Activated CD4-positive, alpha-beta memory T cell treated with anti-CD3 and anti-CD28 coated beads for 36 hours (primary cell): ENCODE measurements at regions of chr1 and their contacts with region 1.

Region 1: DNA sequence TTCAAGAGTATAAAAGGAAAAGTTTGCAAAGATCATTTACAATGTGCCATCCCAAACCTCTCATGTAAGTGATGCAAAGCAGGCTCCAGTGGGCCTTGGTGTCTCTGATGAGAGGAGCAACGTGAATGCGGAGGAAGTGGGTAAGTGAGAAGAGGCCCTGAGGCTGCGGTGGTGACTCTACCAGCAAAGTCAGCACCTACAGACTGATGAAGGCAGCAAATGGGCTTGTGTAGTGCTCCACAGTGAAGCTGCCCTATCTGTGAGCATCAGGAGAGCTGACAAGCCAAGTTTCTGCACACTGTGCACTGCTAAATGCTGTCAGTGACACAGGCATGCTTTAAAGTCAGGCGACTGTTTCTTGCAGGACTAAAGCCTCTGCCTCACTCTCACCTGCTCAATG is 15.6 kb upstream of the RAP1A start:
- DNase-seq: peak; percentile 92
- H3K4me3 Mint-ChIP-seq: peak overlapping the region; percentile 70
- H3K27ac Mint-ChIP-seq: peak overlapping the region; percentile 96
- H3K4me1 Mint-ChIP-seq: peaks cover 72% of the 10 kb centered on the region
- H3K27me3 Mint-ChIP-seq: no peaks in the 10 kb centered on the region

Region 2: GRCh38 chr1:111203681-111204200 is 400.2 kb before region 1 on chr1:
- CTCF ChIA-PET with region 1: no interaction called
- POLR2A ChIA-PET with region 1: no interaction called
- intact Hi-C with region 1: loop called (anchors 5 kb)
- DNase-seq: peak; percentile 93
- H3K4me3 Mint-ChIP-seq: peak overlapping the region; percentile 92
- H3K27ac Mint-ChIP-seq: peak overlapping the region; percentile 97
- H3K4me1 Mint-ChIP-seq: peaks cover 38% of the 10 kb centered on the region
- H3K27me3 Mint-ChIP-seq: no peaks in the 10 kb centered on the region

Region 3: DNA sequence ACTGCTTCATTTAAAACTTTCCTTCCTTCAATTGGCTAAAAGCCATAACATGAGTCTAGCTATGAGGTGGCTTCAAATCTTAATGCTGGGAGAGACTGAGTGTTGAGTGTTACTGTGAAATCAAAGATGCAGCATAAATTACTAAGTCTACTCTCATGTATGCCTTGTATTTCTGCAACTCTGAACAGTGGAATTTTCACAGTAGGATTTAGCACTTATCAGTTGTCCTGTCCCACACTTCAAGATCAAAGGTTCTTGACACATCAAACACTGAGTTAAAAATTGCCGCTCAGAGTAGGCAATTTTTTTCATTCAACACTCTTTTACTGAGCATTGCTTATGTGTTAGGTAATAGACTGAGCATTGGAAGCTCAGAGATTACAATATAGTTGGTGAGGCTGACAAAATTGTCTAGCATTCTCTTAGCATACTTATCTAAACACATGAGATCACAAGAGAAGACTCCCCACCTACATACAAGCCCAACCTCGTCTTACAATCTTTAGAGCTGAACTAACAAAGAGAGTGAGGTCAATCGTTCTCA is 44.2 kb before region 1 on chr1:
- CTCF ChIA-PET with region 1: interaction called, 3 read pairs
- POLR2A ChIA-PET with region 1: interaction called, 3 read pairs
- intact Hi-C with region 1: loop called (anchors 5 kb)
- DNase-seq: no peak
- H3K4me3 Mint-ChIP-seq: no peak overlapping the region
- H3K27ac Mint-ChIP-seq: no peak overlapping the region
- H3K4me1 Mint-ChIP-seq: peaks cover 5% of the 10 kb centered on the region
- H3K27me3 Mint-ChIP-seq: no peaks in the 10 kb centered on the region

Region 4: DNA sequence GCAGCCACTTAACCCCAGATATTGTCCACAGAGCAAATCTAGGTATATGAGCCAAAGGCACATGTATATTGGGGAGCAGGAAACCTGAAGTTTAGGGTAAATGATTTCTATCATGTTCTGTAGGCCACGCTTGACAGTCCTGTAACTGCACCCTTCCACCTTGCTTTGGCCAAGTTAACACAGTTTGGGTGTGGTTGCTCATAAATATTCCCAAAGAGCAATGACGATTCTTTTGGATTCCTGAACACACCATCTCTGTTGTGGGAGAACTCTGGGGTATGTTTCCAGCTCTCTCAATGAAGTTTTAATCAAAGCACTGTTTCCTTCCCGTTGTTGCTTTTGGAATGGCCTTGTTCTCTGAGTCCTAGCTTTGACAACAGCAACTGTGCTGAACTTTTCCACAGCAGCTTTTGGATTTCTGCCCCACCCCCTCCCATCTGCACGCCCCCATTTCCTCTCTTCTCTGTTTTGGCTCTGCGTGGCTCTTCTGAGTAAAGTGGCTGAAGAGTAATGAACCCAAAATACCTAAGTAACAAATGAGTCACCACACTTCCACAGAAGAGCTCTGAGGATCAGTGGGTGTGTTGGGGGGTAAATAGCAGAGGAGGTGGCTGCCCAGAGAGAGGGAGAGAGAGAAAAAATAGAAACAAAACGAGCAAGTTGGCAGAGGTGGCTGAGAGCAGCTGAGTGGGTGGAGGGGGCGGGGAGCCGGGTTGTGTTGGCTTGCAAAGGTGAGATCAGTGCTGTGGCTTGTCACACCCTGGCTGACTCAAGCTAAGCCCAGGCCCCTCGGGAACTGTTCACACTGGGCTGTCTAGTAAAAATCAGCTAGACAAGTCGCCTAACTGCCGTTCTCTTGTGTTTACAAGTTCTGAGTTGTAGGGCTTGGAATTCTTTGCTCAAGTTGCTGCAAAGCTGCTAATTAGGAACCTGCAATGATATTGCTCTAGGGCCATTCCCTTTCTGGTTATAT is 11.3 kb before region 1 on chr1:
- CTCF ChIA-PET with region 1: interaction called, 57 read pairs
- POLR2A ChIA-PET with region 1: interaction called, 70 read pairs
- intact Hi-C with region 1: loop called (anchors 1 kb)
- DNase-seq: peak; percentile 99
- H3K4me3 Mint-ChIP-seq: peak overlapping the region; percentile 61
- H3K27ac Mint-ChIP-seq: peak overlapping the region; percentile 93
- H3K4me1 Mint-ChIP-seq: peaks cover 74% of the 10 kb centered on the region
- H3K27me3 Mint-ChIP-seq: no peaks in the 10 kb centered on the region

Region 5: DNA sequence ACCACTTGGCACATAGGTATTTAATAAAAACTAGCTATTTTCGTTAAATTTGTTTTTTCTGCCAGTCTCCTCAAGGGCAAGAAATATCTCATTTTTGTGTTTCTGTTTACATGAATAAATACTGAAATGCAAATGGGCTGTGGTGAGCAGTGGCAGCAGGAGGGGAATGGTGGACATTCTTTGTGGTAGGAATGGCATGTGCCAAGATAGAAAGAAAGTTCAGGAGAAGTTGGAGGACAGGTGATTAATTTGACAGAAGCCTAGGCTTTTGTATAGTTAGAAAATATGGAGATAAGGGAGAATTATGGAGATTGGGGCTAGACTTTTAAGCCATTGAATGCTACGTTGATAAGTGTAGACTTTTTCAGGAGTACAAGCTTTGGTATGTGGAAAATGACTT is 24.2 kb after region 1 on chr1:
- CTCF ChIA-PET with region 1: interaction called, 8 read pairs
- POLR2A ChIA-PET with region 1: interaction called, 151 read pairs
- intact Hi-C with region 1: loop called (anchors 1 kb)
- DNase-seq: no peak
- H3K4me3 Mint-ChIP-seq: peak overlapping the region; percentile 18
- H3K27ac Mint-ChIP-seq: peak overlapping the region; percentile 68
- H3K4me1 Mint-ChIP-seq: peaks cover 82% of the 10 kb centered on the region
- H3K27me3 Mint-ChIP-seq: no peaks in the 10 kb centered on the region

Region 6: DNA sequence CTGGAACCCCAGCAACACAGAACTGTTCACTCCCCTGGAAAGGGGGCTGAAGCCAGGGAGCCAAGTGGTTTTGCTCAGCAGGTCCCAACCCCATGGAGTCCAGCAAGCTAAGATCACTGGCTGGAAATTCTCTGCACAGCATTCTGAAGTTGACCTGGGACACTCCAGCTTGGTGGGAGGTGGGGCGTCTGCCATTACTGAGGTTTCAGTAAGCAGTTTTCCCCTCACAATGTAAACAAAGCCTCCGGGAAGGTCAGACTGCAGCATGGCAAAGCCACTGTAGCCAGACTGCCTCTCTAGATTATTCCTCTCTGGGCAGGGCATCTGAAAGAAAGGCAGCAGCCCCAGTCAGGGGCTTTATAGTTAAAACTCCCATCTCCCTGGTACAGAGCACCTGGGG is 75.6 kb after region 1 on chr1:
- CTCF ChIA-PET with region 1: no interaction called
- POLR2A ChIA-PET with region 1: no interaction called
- intact Hi-C with region 1: no loop called
- DNase-seq: no peak
- H3K4me3 Mint-ChIP-seq: no peak overlapping the region
- H3K27ac Mint-ChIP-seq: no peak overlapping the region
- H3K4me1 Mint-ChIP-seq: peaks cover 46% of the 10 kb centered on the region
- H3K27me3 Mint-ChIP-seq: no peaks in the 10 kb centered on the region

Region 7: DNA sequence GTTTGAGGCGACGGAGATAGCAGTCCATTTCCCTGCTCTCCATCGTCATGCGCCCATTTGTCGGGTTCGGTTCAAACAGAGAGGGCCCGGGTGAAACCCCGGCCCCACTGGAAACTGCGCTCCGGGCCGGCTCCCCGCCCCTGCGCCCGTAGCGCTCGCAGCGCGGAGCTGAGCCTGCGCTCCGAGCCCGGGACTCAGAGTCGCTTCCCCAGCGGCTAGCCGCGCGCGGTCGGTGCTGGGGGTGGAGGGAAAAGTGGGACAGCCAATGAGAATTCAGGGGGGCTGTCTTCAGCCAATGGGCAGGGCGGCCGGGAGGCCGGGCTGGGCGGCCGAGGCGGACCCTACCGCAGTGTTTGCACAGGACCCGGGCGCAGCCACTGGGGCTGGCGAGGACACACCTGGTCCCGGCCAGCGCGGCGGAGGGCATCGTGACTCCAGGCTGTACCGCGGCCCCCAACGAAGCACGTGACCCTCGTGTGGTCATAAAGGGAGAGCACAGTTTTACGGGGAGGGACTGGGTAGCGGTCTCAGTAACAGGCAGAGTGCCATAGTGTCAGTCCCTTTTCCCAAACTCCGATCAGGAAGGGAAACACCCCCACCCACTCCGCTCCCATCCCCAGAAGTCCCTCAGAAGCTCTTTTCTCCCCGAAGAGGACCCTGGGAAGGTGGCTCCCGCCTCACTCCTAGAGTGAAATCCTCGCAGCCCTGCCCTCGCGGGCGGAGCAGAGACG is 135.4 kb after region 1 on chr1 and contains the start of gene INKA2:
- CTCF ChIA-PET with region 1: no interaction called
- POLR2A ChIA-PET with region 1: no interaction called
- intact Hi-C with region 1: loop called (anchors 5 kb)
- DNase-seq: peak; percentile 88
- H3K4me3 Mint-ChIP-seq: peak within 1 kb of the TSS; percentile 84
- H3K27ac Mint-ChIP-seq: no peak within 1 kb of the TSS
- H3K4me1 Mint-ChIP-seq: peaks cover 11% of the 10 kb centered on the region
- H3K27me3 Mint-ChIP-seq: peaks cover 28% of the 10 kb centered on the region
- total RNA-seq, gene INKA2: 1.4 to 2.3 TPM